K562 (cell line): ENCODE measurements at regions of chr5 and their contacts with region 1.

Region 1: GRCh38 chr5:149803641-149804468 is 73.7 kb downstream of the PPARGC1B start:
- DNase-seq: peak in 1 of 4 experiments; percentile 35
- ATAC-seq: no peak
- H3K4me3 ChIP-seq: no peak overlapping the region
- H3K27ac ChIP-seq: 0 out of 3 replicates have a peak overlapping the region, but pooled peaks have one; percentile 1
- H3K4me1 ChIP-seq: peaks cover 48 to 86% of the 10 kb centered on the region in 2 experiments
- H3K27me3 ChIP-seq: no peaks in the 10 kb centered on the region
- CTCF ChIP-seq: no peak
- EP300 ChIP-seq: no peak
- POLR2A ChIP-seq: no peak
- RAD21 ChIP-seq: no peak

Region 2: GRCh38 chr5:149448831-149449714 is 354.8 kb before region 1 on chr5:
- CTCF ChIA-PET with region 1: no interaction called
- POLR2A ChIA-PET with region 1: no interaction called
- in situ Hi-C with region 1: no loop called
- intact Hi-C with region 1: loop called (anchors 10 kb)
- DNase-seq: peak; percentile 48 to 82 (median 62)
- ATAC-seq: peak; percentile 66
- H3K4me3 ChIP-seq: no peak overlapping the region
- H3K27ac ChIP-seq: no peak overlapping the region
- H3K4me1 ChIP-seq: peaks cover 48 to 62% of the 10 kb centered on the region in 2 experiments
- H3K27me3 ChIP-seq: no peaks in the 10 kb centered on the region
- CTCF ChIP-seq: peak; percentile 70 to 86 (median 78)
- EP300 ChIP-seq: no peak; the same call in 1 of the 2 replicates
- POLR2A ChIP-seq: no peak
- RAD21 ChIP-seq: peak; percentile 81 to 90

Region 3: GRCh38 chr5:150044329-150044681 is 240.4 kb after region 1 on chr5:
- CTCF ChIA-PET with region 1: no interaction called
- POLR2A ChIA-PET with region 1: no interaction called
- in situ Hi-C with region 1: no loop called
- intact Hi-C with region 1: no loop called
- DNase-seq: no peak
- ATAC-seq: no peak
- H3K4me3 ChIP-seq: no peak overlapping the region
- H3K27ac ChIP-seq: no peak overlapping the region
- H3K4me1 ChIP-seq: peaks cover 5 to 22% of the 10 kb centered on the region in 2 experiments; a peak in 4 of 5 replicates
- H3K27me3 ChIP-seq: no peaks in the 10 kb centered on the region
- CTCF ChIP-seq: no peak
- EP300 ChIP-seq: no peak
- POLR2A ChIP-seq: no peak
- RAD21 ChIP-seq: no peak